Activated CD4-positive, alpha-beta T cell treated with anti-CD3 and anti-CD28 coated beads, Interleukin-2, amount 10 ng/mL, durations not matched to agents 7 days and 5 days (primary cell): ENCODE measurements at regions of chr1 and their contacts with region 1.

Region 1: GRCh38 chr1:205977402-205978014 is 25.7 kb downstream of the RAB7B start:
- DNase-seq: peak; percentile 83
- H3K4me3 Mint-ChIP-seq: no peak overlapping the region
- H3K27ac Mint-ChIP-seq: no peak overlapping the region
- H3K4me1 Mint-ChIP-seq: no peaks in the 10 kb centered on the region
- H3K27me3 Mint-ChIP-seq: no peaks in the 10 kb centered on the region

Region 2: DNA sequence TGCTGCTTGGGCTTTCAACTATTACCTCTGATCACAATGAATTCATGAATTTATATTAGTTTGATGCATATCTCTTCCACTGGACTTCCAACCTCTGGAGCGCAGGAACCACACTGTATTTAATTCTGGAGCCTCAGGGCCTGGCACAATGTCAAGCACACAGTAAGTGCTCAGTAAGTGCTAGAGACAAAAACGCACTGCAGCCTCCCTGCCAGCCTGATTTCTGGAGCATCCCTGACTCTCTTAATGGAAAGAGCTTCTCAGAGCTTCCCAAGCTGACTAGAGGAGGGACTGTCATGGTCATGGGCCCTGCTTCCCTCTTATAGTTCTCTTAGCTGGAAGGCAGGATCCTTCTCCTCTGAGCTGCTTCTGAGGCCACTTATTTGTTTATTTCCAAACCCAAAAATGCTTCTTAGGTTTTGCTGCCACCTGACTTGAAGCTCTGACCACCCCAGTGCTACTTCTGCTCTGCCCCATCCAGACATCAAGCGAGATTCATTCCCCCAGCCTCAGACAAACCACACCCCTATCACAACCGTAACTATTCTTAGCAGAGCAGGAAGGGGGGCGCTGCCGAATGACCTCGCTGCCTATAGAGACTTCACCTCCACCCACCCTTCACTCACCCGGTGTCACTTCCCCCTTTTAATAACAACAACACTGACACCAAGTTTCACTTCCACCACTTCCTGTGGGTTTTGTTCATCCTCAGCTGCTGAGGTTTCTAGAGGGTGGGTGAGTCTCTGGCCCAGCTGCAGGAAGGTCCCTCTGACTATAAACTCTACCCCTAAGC is 689.5 kb before region 1 on chr1:
- CTCF ChIA-PET with region 1: no interaction called
- POLR2A ChIA-PET with region 1: no interaction called
- DNase-seq: peak; percentile 92
- H3K4me3 Mint-ChIP-seq: peak overlapping the region; percentile 53
- H3K27ac Mint-ChIP-seq: peak overlapping the region; percentile 92
- H3K4me1 Mint-ChIP-seq: peaks cover 78% of the 10 kb centered on the region
- H3K27me3 Mint-ChIP-seq: peaks cover 7% of the 10 kb centered on the region

Region 3: DNA sequence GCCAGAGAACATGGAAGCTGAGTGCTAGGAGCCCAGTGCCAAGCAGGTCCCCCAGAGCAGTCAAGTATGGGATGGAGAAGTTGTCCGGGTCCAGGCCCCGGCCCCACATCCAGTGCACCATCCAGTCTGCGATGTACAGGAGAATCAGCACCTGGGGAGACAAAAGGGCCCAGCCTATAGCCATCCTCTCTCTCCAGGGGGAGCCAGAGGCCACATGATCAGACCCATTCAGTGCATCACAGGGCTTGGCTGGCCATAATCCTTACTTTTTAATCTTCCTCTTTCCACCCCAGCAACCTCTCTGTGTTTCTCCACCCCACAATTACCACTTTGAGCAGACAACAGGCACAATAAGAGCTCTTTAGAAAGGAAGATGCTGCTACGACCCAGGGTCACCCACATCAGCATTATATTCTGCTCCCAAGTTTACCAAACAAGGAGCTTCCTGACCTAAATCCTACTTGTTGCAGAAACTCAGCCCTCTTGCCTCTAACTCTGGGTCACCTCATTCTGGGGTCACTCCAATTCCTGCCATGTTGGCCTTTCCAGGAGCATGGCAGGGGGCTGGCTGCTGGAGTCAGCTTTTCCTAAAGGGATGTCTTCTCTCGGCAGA is 185.8 kb before region 1 on chr1:
- CTCF ChIA-PET with region 1: interaction called, 29 read pairs
- POLR2A ChIA-PET with region 1: no interaction called
- DNase-seq: peak; percentile 74
- H3K4me3 Mint-ChIP-seq: no peak overlapping the region
- H3K27ac Mint-ChIP-seq: no peak overlapping the region
- H3K4me1 Mint-ChIP-seq: peaks cover 1% of the 10 kb centered on the region
- H3K27me3 Mint-ChIP-seq: no peaks in the 10 kb centered on the region

Region 4: GRCh38 chr1:205919026-205919746 is 58.3 kb before region 1 on chr1:
- CTCF ChIA-PET with region 1: interaction called, 73 read pairs
- POLR2A ChIA-PET with region 1: interaction called, 3 read pairs
- DNase-seq: peak; percentile 78
- H3K4me3 Mint-ChIP-seq: no peak overlapping the region
- H3K27ac Mint-ChIP-seq: no peak overlapping the region
- H3K4me1 Mint-ChIP-seq: peaks cover 2% of the 10 kb centered on the region
- H3K27me3 Mint-ChIP-seq: no peaks in the 10 kb centered on the region

Region 5: GRCh38 chr1:205963352-205964155 is 14.0 kb before region 1 on chr1:
- CTCF ChIA-PET with region 1: interaction called, 15 read pairs
- POLR2A ChIA-PET with region 1: no interaction called
- DNase-seq: no peak
- H3K4me3 Mint-ChIP-seq: no peak overlapping the region
- H3K27ac Mint-ChIP-seq: no peak overlapping the region
- H3K4me1 Mint-ChIP-seq: peaks cover 2% of the 10 kb centered on the region
- H3K27me3 Mint-ChIP-seq: peaks cover 3% of the 10 kb centered on the region

Region 6: GRCh38 chr1:206080026-206080820 is 102.7 kb after region 1 on chr1:
- CTCF ChIA-PET with region 1: no interaction called
- POLR2A ChIA-PET with region 1: no interaction called
- DNase-seq: peak; percentile 24
- H3K4me3 Mint-ChIP-seq: peak overlapping the region; percentile 17
- H3K27ac Mint-ChIP-seq: peak overlapping the region; percentile 59
- H3K4me1 Mint-ChIP-seq: peaks cover 29% of the 10 kb centered on the region
- H3K27me3 Mint-ChIP-seq: peaks cover 33% of the 10 kb centered on the region